ENCODE measurements at regions of chr12 and their contacts with region 1.

Region 1: GRCh38 chr12:80269803-80270552 is 170.6 kb downstream of the OTOGL start:
- DNase-seq: peak; percentile 38
- H3K4me3 ChIP-seq: no peak overlapping the region
- H3K27ac ChIP-seq: no peak overlapping the region
- H3K4me1 ChIP-seq: no peaks in the 10 kb centered on the region
- CTCF ChIP-seq: peak; percentile 86

Region 2: DNA sequence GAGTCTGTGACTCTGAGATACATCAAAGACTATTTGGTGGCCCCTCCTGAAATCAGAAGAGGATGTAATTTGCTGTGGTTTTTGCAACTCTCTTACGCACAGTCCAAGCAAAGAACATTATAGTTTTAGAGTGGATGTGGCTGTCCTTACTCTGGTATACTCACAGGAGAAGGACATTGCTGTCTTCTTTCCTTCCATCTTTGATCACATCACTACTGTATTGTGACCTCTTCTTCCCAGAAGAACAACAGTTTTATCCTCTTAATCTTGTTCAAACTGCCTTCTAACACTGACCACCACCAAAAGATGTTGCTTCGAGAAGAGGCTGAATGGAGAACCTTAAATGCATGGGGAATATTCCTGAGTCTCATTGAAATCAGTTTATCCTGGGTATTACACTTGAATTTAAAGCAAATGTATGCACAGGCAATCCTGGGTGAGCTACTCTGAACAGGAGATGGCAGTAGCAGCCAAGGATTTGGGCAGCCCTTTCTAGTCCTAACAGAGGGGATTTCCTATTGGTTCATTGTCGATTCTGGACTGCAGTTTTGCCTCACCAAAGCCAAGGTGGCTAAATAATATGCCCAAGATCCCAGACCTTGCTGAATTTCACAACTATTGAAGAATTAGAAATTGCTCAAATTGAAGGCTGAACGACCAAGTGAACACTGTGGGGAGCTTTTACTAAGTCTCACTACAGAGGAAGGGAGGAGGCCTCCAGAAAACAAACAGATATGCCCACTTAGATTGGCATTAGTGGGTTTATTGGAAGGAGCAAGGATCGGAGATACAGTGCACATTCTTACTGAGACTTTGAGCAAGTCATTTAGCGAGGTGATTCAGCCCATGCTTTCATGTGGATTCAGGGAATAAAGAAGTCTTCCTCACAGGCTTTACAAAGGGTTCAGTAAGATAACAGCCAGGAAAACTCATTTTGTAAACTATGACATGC is 862.0 kb before region 1 on chr12:
- CTCF ChIA-PET with region 1: no interaction called
- POLR2A ChIA-PET with region 1: no interaction called
- intact Hi-C with region 1: loop called (anchors 5 kb)
- DNase-seq: peak; percentile 42
- H3K4me3 ChIP-seq: no peak overlapping the region
- H3K27ac ChIP-seq: no peak overlapping the region
- H3K4me1 ChIP-seq: no peaks in the 10 kb centered on the region
- CTCF ChIP-seq: peak; percentile 73

Region 3: GRCh38 chr12:79547735-79548609 is 722.0 kb before region 1 on chr12:
- CTCF ChIA-PET with region 1: no interaction called
- POLR2A ChIA-PET with region 1: no interaction called
- intact Hi-C with region 1: loop called (anchors 5 kb)
- DNase-seq: peak; percentile 51
- H3K4me3 ChIP-seq: no peak overlapping the region
- H3K27ac ChIP-seq: no peak overlapping the region
- H3K4me1 ChIP-seq: no peaks in the 10 kb centered on the region
- CTCF ChIP-seq: peak; percentile 90